ENCODE measurements at regions of chr22 and their contacts with region 1.

Region 1: GRCh38 chr22:27299181-27300085 is 502.1 kb downstream of the MN1 start:
- DNase-seq: no peak
- H3K4me3 ChIP-seq: no peak overlapping the region
- H3K27ac ChIP-seq: no peak overlapping the region
- H3K4me1 ChIP-seq: no peaks in the 10 kb centered on the region
- H3K27me3 ChIP-seq: no peaks in the 10 kb centered on the region
- CTCF ChIP-seq: no peak

Region 2: GRCh38 chr22:26797910-26798309 is 501.5 kb before region 1 on chr22:
- CTCF ChIA-PET with region 1: no interaction called
- dilution Hi-C with region 1: loop called (anchors 10 kb)
- in situ Hi-C with region 1: no loop called
- intact Hi-C with region 1: no loop called
- DNase-seq: no peak
- H3K4me3 ChIP-seq: no peak overlapping the region
- H3K27ac ChIP-seq: no peak overlapping the region
- H3K4me1 ChIP-seq: no peaks in the 10 kb centered on the region
- H3K27me3 ChIP-seq: no peaks in the 10 kb centered on the region
- CTCF ChIP-seq: no peak

Region 3: DNA sequence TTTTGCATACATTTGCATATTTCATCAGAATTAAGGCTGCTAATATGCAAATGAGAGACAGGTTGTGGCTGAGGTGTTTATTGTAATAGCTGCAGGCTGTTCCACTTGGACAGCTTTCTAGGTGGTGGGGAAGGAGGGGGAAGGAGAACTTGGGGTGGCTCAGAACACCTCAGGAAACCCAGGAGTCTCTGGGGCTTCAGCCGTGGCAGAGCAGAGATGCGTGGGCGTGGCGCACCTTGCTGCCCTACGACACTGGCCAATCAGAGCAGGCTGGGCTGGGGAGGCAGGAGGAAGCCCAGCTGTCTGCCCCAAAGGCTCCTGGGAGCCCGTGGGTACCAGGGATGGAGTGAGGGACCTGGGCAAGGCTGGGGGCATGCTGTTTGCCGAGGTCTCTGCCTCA is 40.7 kb before region 1 on chr22:
- CTCF ChIA-PET with region 1: no interaction called
- dilution Hi-C with region 1: no loop called
- in situ Hi-C with region 1: no loop called
- intact Hi-C with region 1: no loop called
- DNase-seq: no peak
- H3K4me3 ChIP-seq: no peak overlapping the region
- H3K27ac ChIP-seq: no peak overlapping the region
- H3K4me1 ChIP-seq: no peaks in the 10 kb centered on the region
- H3K27me3 ChIP-seq: no peaks in the 10 kb centered on the region
- CTCF ChIP-seq: no peak

Measured in mammary epithelial cell (primary cell).